ENCODE measurements at regions of chr1 and their contacts with region 1.

Region 1: GRCh38 chr1:54406339-54407153 is at the start of gene SSBP3:
- DNase-seq: peak; percentile 76 to 97
- H3K4me3 ChIP-seq: peak within 1 kb of the TSS; percentile 61
- H3K27ac ChIP-seq: no peak within 1 kb of the TSS
- H3K4me1 ChIP-seq: peaks cover 22% of the 10 kb centered on the region
- H3K27me3 ChIP-seq: no peaks in the 10 kb centered on the region
- CTCF ChIP-seq: no peak
- total RNA-seq, gene SSBP3: 26.2 and 26.5 TPM in 2 replicates

Region 2: DNA sequence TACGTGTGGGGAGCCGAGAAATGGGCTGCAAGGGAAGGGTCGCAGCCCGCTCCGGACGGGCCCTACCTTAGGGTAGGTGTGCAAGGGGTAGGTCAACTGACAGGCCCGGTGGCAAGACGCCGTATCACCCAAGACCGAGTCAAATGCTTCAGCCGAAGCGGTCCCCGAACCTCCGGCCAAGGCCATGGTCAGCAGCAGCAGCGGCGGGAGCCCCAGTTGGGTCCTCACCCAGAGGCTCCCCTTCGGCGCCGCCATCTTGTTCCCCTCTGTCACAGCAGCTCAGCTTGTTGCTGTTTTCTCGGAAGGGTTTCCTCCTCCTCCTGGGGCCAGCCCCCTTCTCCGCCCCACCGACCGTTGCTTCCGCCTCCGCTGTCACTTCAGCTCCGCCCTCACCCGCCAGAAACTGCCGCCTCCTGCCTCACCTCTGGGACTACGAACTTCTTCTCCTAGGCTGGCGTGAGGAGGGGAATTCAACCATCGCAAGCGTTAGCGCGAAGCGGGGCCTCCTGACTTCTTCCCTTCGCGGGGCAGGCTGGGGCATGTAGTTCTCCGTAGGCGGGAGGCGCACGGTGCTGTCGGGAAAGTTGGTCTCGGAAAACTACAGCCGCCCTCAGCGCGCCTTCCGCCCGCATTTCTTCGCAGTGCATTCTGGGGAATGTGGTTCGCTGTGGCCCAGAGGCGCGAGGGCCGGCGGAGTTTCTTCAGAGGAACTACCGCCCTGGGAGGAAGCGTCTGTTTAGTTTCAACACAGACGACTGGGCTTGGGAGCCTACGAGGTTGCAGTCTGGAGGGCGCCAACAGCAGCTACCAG is 353.4 kb before region 1 on chr1 and contains the starts of genes TCEANC2 and TMEM59:
- CTCF ChIA-PET with region 1: no interaction called
- POLR2A ChIA-PET with region 1: no interaction called
- intact Hi-C with region 1: loop called (anchors 5 kb)
- DNase-seq: peak; percentile 97 to 99
- H3K4me3 ChIP-seq: peak within 1 kb of the TSS; percentile 85
- H3K27ac ChIP-seq: peak within 1 kb of the TSS; percentile 35
- H3K4me1 ChIP-seq: peaks cover 27% of the 10 kb centered on the region
- H3K27me3 ChIP-seq: no peaks in the 10 kb centered on the region
- CTCF ChIP-seq: no peak
- total RNA-seq, gene TCEANC2: 8.8 and 11.5 TPM in 2 replicates
- total RNA-seq, gene TMEM59: 239 and 287 TPM in 2 replicates

Region 3: GRCh38 chr1:54121482-54122134 is 284.9 kb before region 1 on chr1:
- CTCF ChIA-PET with region 1: interaction called, 6 read pairs
- POLR2A ChIA-PET with region 1: no interaction called
- intact Hi-C with region 1: loop called (anchors 1 kb)
- DNase-seq: peak in 1 of 2 experiments; percentile 85
- H3K4me3 ChIP-seq: no peak overlapping the region
- H3K27ac ChIP-seq: no peak overlapping the region
- H3K4me1 ChIP-seq: no peaks in the 10 kb centered on the region
- H3K27me3 ChIP-seq: peaks cover 12% of the 10 kb centered on the region; the same call in 1 of the 2 replicates
- CTCF ChIP-seq: peak; percentile 73

Region 4: GRCh38 chr1:54253480-54253879 is 153.1 kb before region 1 on chr1:
- CTCF ChIA-PET with region 1: no interaction called
- POLR2A ChIA-PET with region 1: interaction called, 8 read pairs
- intact Hi-C with region 1: loop called (anchors 1 kb)
- DNase-seq: peak; percentile 74 to 77
- H3K4me3 ChIP-seq: no peak overlapping the region
- H3K27ac ChIP-seq: no peak overlapping the region
- H3K4me1 ChIP-seq: peaks cover 31% of the 10 kb centered on the region
- H3K27me3 ChIP-seq: no peaks in the 10 kb centered on the region
- CTCF ChIP-seq: no peak

Region 5: GRCh38 chr1:54310439-54311328 is 95.9 kb before region 1 on chr1:
- CTCF ChIA-PET with region 1: no interaction called
- POLR2A ChIA-PET with region 1: no interaction called
- intact Hi-C with region 1: loop called (anchors 10 kb)
- DNase-seq: no peak
- H3K4me3 ChIP-seq: no peak overlapping the region
- H3K27ac ChIP-seq: no peak overlapping the region
- H3K4me1 ChIP-seq: no peaks in the 10 kb centered on the region
- H3K27me3 ChIP-seq: no peaks in the 10 kb centered on the region
- CTCF ChIP-seq: peak; percentile 51

Measured in PC-9 (cell line).